K562 (cell line): ENCODE measurements at regions of chr22 and their contacts with region 1.

Region 1: DNA sequence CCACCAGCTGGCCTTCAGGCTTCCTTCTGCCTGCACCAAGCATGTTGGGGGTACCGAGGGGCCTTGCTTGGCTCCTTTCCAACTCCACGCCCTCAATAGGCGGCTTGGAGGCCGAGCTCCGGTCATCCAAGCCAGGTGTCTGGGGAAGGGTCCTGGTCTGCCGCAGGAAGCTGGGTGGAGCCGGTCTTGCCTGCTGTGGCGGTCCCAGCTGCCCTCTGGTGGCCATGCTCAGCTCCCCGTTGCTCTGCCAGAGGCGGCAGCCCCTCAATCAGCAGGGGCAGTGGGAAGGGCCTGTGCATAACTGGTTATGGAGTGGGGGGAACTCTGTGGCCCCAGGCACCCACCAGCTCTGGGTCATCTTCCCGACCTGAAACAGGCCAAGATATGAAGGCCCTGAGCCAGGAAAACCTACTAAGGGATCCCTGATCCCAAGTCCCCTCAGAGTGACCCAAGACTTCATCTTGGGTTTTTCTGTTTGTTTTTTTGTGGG is 3.2 kb downstream of the ARVCF start:
- DNase-seq: peak; percentile 87 to 90 (median 88)
- ATAC-seq: peak; percentile 56
- H3K4me3 ChIP-seq: no peak overlapping the region
- H3K27ac ChIP-seq: no peak overlapping the region
- H3K4me1 ChIP-seq: peaks cover 63 to 90% of the 10 kb centered on the region in 2 experiments
- H3K27me3 ChIP-seq: peaks cover 0 to 8% of the 10 kb centered on the region in 2 experiments; a peak in 1 of 5 replicates
- CTCF ChIP-seq: peak; percentile 98 to 100 (median 99)
- EP300 ChIP-seq: no peak
- POLR2A ChIP-seq: no peak
- RAD21 ChIP-seq: peak; percentile 99 to 100

Region 2: DNA sequence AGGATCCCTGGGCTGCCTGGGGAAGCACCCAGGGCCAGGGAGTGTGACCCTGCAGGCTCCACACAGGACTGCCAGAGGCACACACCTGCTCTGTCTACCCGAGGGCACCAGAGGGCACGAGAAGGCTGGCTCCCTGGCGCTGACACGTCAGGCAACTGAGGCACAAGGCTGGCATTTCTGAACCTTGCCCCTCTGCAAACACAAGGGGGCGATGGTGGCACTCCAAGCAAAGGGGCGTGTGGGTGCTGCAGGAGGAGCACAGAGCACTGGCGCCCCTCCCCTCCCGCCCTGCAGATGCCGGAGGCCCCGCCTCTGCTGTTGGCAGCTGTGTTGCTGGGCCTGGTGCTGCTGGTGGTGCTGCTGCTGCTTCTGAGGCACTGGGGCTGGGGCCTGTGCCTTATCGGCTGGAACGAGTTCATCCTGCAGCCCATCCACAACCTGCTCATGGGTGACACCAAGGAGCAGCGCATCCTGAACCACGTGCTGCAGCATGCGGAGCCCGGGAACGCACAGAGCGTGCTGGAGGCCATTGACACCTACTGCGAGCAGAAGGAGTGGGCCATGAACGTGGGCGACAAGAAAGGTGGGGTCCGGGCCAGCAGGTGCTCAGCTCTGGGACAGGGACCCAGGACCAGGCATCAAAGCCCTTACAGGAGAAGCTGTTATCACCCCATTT is 51.1 kb before region 1 on chr22:
- CTCF ChIA-PET with region 1: interaction called, 4 read pairs
- POLR2A ChIA-PET with region 1: interaction called, 10 read pairs
- in situ Hi-C with region 1: no loop called
- intact Hi-C with region 1: no loop called
- DNase-seq: peak; percentile 96 to 100 (median 98)
- ATAC-seq: peak; percentile 68
- H3K4me3 ChIP-seq: no peak overlapping the region
- H3K27ac ChIP-seq: no peak overlapping the region
- H3K4me1 ChIP-seq: peaks cover 27 to 73% of the 10 kb centered on the region in 2 experiments
- H3K27me3 ChIP-seq: no peaks in the 10 kb centered on the region
- CTCF ChIP-seq: peak; percentile 95 to 99 (median 96)
- EP300 ChIP-seq: no peak
- POLR2A ChIP-seq: peak; percentile 65; the same call in 1 of the 2 replicates
- RAD21 ChIP-seq: peak; percentile 45 to 79; a peak in 3 of 4 replicates

Region 3: GRCh38 chr22:19991645-19992451 is 21.6 kb before region 1 on chr22:
- CTCF ChIA-PET with region 1: interaction called, 3 read pairs
- POLR2A ChIA-PET with region 1: interaction called, 24 read pairs
- in situ Hi-C with region 1: no loop called
- intact Hi-C with region 1: no loop called
- DNase-seq: peak in 1 of 4 experiments; percentile 27
- ATAC-seq: no peak
- H3K4me3 ChIP-seq: no peak overlapping the region
- H3K27ac ChIP-seq: no peak overlapping the region
- H3K4me1 ChIP-seq: peaks cover 31 to 70% of the 10 kb centered on the region in 2 experiments
- H3K27me3 ChIP-seq: no peaks in the 10 kb centered on the region
- CTCF ChIP-seq: peak in 1 of 3 experiments; percentile 18; a peak in 1 of 6 replicates
- EP300 ChIP-seq: no peak
- POLR2A ChIP-seq: no peak
- RAD21 ChIP-seq: no peak

Region 4: DNA sequence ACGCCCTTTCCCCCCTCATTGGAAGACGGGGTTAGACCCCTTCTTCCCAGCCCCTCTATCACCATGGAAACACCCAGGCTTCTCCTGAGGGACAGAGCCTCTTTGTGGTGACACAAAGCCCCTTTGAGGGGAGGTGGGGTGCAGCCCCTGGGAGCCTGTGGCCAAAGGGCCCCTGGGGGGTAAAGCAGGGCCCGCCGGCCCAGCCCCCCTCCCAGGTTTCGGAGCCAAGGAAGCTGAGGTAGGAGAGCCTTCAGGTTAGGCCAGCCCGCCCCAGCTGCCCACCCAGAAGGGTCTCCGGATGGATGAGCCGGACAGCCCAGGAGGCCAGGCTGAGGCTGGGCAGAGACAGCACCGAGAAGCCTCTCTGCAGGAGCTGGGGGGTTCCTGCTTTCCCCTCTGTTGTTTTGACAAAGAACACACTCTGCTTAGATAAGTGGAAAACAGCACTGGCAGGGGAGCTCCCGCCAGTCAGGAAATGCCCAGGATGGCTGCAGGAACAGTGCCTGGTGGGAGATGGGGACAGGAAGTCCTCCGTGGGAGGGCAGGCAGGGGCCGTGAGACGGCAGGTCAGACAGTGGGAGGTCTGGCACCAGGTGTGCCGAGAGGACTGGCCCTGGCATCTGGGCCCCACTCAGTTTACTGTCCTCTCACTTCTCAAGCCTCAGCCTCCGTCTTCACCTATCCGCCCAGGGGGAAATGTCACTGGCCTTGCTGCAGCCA is 15.0 kb before region 1 on chr22:
- CTCF ChIA-PET with region 1: interaction called, 3 read pairs
- POLR2A ChIA-PET with region 1: interaction called, 24 read pairs
- in situ Hi-C with region 1: no loop called
- intact Hi-C with region 1: no loop called
- DNase-seq: no peak
- ATAC-seq: no peak
- H3K4me3 ChIP-seq: no peak overlapping the region
- H3K27ac ChIP-seq: no peak overlapping the region
- H3K4me1 ChIP-seq: peaks cover 16 to 53% of the 10 kb centered on the region in 2 experiments; a peak in 4 of 5 replicates
- H3K27me3 ChIP-seq: no peaks in the 10 kb centered on the region
- CTCF ChIP-seq: no peak
- EP300 ChIP-seq: no peak
- POLR2A ChIP-seq: no peak
- RAD21 ChIP-seq: no peak